B cell (primary cell): ENCODE measurements at regions of chrX and their contacts with region 1.

Region 1: GRCh38 chrX:21985332-21985777 is 44.8 kb downstream of the SMS start:
- DNase-seq: peak; percentile 80
- ATAC-seq: peak; percentile 94
- H3K4me3 ChIP-seq: no peak overlapping the region
- H3K4me3 Mint-ChIP-seq: no peak overlapping the region
- H3K27ac ChIP-seq: no peak overlapping the region
- H3K27ac Mint-ChIP-seq: peak overlapping the region; percentile 10
- H3K4me1 ChIP-seq: peaks cover 0 to 13% of the 10 kb centered on the region in 2 donors
- H3K4me1 Mint-ChIP-seq: peaks cover 13% of the 10 kb centered on the region
- H3K27me3 ChIP-seq: no peaks in the 10 kb centered on the region
- H3K27me3 Mint-ChIP-seq: no peaks in the 10 kb centered on the region
- CTCF ChIP-seq: peak; percentile 82

Region 2: GRCh38 chrX:21839334-21840192 is 145.8 kb before region 1 on chrX and contains the start of gene MBTPS2:
- CTCF ChIA-PET with region 1: interaction called, 14 read pairs
- POLR2A ChIA-PET with region 1: no interaction called
- intact Hi-C with region 1: no loop called
- DNase-seq: peak; percentile 85
- ATAC-seq: peak; percentile 94
- H3K4me3 ChIP-seq: peak within 1 kb of the TSS; percentile 39 to 71 (median 69)
- H3K4me3 Mint-ChIP-seq: peak within 1 kb of the TSS; percentile 95
- H3K27ac ChIP-seq: peak within 1 kb of the TSS; percentile 60 to 70
- H3K27ac Mint-ChIP-seq: peak within 1 kb of the TSS; percentile 91
- H3K4me1 ChIP-seq: peaks cover 4 to 5% of the 10 kb centered on the region in 2 donors
- H3K4me1 Mint-ChIP-seq: peaks cover 13% of the 10 kb centered on the region
- H3K27me3 ChIP-seq: no peaks in the 10 kb centered on the region
- H3K27me3 Mint-ChIP-seq: no peaks in the 10 kb centered on the region
- CTCF ChIP-seq: no peak
- total RNA-seq, gene MBTPS2: 8.2 and 8.7 TPM in 2 replicates

Region 3: GRCh38 chrX:22004866-22005265 is 19.5 kb after region 1 on chrX:
- CTCF ChIA-PET with region 1: no interaction called
- POLR2A ChIA-PET with region 1: no interaction called
- intact Hi-C with region 1: no loop called
- DNase-seq: no peak
- ATAC-seq: no peak
- H3K4me3 ChIP-seq: no peak overlapping the region
- H3K4me3 Mint-ChIP-seq: no peak overlapping the region
- H3K27ac ChIP-seq: no peak overlapping the region
- H3K27ac Mint-ChIP-seq: no peak overlapping the region
- H3K4me1 ChIP-seq: peaks cover 0 to 4% of the 10 kb centered on the region in 2 donors
- H3K4me1 Mint-ChIP-seq: no peaks in the 10 kb centered on the region
- H3K27me3 ChIP-seq: no peaks in the 10 kb centered on the region
- H3K27me3 Mint-ChIP-seq: no peaks in the 10 kb centered on the region
- CTCF ChIP-seq: no peak

Region 4: GRCh38 chrX:22135994-22136684 is 150.8 kb after region 1 on chrX:
- CTCF ChIA-PET with region 1: interaction called, 41 read pairs
- POLR2A ChIA-PET with region 1: no interaction called
- intact Hi-C with region 1: loop called (anchors 5 kb)
- DNase-seq: peak; percentile 54
- ATAC-seq: no peak
- H3K4me3 ChIP-seq: no peak overlapping the region
- H3K4me3 Mint-ChIP-seq: no peak overlapping the region
- H3K27ac ChIP-seq: no peak overlapping the region
- H3K27ac Mint-ChIP-seq: no peak overlapping the region
- H3K4me1 ChIP-seq: no peaks in the 10 kb centered on the region
- H3K4me1 Mint-ChIP-seq: peaks cover 6% of the 10 kb centered on the region
- H3K27me3 ChIP-seq: no peaks in the 10 kb centered on the region
- H3K27me3 Mint-ChIP-seq: no peaks in the 10 kb centered on the region
- CTCF ChIP-seq: peak; percentile 71

Region 5: GRCh38 chrX:22534643-22535042 is 549.3 kb after region 1 on chrX:
- CTCF ChIA-PET with region 1: no interaction called
- POLR2A ChIA-PET with region 1: no interaction called
- intact Hi-C with region 1: loop called (anchors 5 kb)
- DNase-seq: no peak
- ATAC-seq: no peak
- H3K4me3 ChIP-seq: no peak overlapping the region
- H3K4me3 Mint-ChIP-seq: no peak overlapping the region
- H3K27ac ChIP-seq: no peak overlapping the region
- H3K27ac Mint-ChIP-seq: no peak overlapping the region
- H3K4me1 ChIP-seq: no peaks in the 10 kb centered on the region
- H3K4me1 Mint-ChIP-seq: peaks cover 4% of the 10 kb centered on the region
- H3K27me3 ChIP-seq: no peaks in the 10 kb centered on the region
- H3K27me3 Mint-ChIP-seq: no peaks in the 10 kb centered on the region
- CTCF ChIP-seq: no peak

Region 6: DNA sequence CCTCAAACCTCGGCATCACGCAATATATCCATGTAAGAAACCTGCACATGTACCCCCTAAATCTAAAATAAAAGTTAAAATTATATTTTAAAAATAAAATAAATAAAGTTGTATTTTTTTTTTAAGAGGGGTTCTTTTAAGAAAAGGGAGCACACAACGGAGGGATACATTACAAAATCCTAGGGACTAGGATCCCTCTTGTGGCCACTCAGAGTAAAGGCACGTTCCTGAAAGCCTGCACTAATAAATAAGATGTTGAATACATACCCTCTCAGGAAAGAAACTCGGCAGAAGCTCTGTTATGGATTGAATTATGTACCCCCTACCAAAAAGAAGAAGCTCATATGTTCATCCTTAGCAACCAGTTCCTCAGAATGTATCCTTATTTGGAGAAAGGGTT is 1631.0 kb after region 1 on chrX:
- CTCF ChIA-PET with region 1: no interaction called
- POLR2A ChIA-PET with region 1: no interaction called
- intact Hi-C with region 1: loop called (anchors 2 kb)
- DNase-seq: peak; percentile 3
- ATAC-seq: no peak
- H3K4me3 ChIP-seq: no peak overlapping the region
- H3K4me3 Mint-ChIP-seq: no peak overlapping the region
- H3K27ac ChIP-seq: no peak overlapping the region
- H3K27ac Mint-ChIP-seq: no peak overlapping the region
- H3K4me1 ChIP-seq: no peaks in the 10 kb centered on the region
- H3K4me1 Mint-ChIP-seq: no peaks in the 10 kb centered on the region
- H3K27me3 ChIP-seq: no peaks in the 10 kb centered on the region
- H3K27me3 Mint-ChIP-seq: peaks cover 1% of the 10 kb centered on the region
- CTCF ChIP-seq: peak; percentile 49